Activated naive CD4-positive, alpha-beta T cell treated with anti-CD3 and anti-CD28 coated beads for 36 hours (primary cell): ENCODE measurements at regions of chr19 and their contacts with region 1.

Region 1: DNA sequence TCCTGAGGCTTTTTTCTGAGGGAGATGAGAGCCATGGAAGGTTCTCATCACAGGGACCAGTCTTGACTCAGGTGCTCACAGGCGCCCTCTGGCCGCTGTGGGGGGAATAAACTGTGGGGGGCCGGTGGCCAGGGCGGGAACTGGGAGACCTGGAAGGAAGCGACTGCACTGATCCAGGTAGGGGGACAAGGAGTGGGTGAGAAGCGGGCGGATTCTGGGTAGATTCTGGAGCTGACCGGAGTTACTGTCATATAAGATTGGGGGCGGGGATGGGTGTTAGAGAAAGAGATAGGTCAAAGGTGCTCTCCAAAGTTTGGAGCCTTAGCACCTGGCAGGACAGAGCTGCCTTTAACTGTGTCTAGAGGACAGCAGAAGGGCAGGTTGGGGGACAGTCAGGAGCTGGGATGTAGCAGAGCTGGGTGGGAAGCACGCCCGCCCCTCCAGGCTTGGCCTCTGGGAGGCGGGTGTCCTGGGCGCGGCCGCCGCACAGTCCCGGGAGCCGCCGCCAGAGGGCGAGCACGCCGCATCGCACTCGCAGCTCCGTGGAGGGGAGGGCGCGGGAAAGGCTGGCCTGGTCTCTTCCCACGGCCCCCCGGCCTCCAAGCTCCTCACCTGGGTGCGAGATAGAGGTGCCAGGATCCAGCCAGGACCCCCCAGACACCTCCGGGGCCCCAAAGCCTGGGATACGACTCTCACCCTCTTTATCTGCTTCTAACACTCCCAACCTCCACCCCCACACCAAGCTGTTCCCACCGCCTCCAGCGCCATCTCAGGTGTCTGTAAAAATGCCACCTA is 4.2 kb upstream of the DAND5 start:
- DNase-seq: peak; percentile 92
- H3K4me3 Mint-ChIP-seq: peak overlapping the region; percentile 93
- H3K27ac Mint-ChIP-seq: peak overlapping the region; percentile 88
- H3K4me1 Mint-ChIP-seq: peaks cover 11% of the 10 kb centered on the region
- H3K27me3 Mint-ChIP-seq: no peaks in the 10 kb centered on the region

Region 2: GRCh38 chr19:12705654-12706331 is 259.4 kb before region 1 on chr19:
- CTCF ChIA-PET with region 1: no interaction called
- intact Hi-C with region 1: no loop called
- DNase-seq: no peak
- H3K4me3 Mint-ChIP-seq: no peak overlapping the region
- H3K27ac Mint-ChIP-seq: no peak overlapping the region
- H3K4me1 Mint-ChIP-seq: no peaks in the 10 kb centered on the region
- H3K27me3 Mint-ChIP-seq: no peaks in the 10 kb centered on the region

Region 3: GRCh38 chr19:12825254-12826131 is 139.7 kb before region 1 on chr19:
- CTCF ChIA-PET with region 1: no interaction called
- intact Hi-C with region 1: no loop called
- DNase-seq: peak; percentile 41
- H3K4me3 Mint-ChIP-seq: no peak overlapping the region
- H3K27ac Mint-ChIP-seq: no peak overlapping the region
- H3K4me1 Mint-ChIP-seq: peaks cover 7% of the 10 kb centered on the region
- H3K27me3 Mint-ChIP-seq: peaks cover 40% of the 10 kb centered on the region

Region 4: DNA sequence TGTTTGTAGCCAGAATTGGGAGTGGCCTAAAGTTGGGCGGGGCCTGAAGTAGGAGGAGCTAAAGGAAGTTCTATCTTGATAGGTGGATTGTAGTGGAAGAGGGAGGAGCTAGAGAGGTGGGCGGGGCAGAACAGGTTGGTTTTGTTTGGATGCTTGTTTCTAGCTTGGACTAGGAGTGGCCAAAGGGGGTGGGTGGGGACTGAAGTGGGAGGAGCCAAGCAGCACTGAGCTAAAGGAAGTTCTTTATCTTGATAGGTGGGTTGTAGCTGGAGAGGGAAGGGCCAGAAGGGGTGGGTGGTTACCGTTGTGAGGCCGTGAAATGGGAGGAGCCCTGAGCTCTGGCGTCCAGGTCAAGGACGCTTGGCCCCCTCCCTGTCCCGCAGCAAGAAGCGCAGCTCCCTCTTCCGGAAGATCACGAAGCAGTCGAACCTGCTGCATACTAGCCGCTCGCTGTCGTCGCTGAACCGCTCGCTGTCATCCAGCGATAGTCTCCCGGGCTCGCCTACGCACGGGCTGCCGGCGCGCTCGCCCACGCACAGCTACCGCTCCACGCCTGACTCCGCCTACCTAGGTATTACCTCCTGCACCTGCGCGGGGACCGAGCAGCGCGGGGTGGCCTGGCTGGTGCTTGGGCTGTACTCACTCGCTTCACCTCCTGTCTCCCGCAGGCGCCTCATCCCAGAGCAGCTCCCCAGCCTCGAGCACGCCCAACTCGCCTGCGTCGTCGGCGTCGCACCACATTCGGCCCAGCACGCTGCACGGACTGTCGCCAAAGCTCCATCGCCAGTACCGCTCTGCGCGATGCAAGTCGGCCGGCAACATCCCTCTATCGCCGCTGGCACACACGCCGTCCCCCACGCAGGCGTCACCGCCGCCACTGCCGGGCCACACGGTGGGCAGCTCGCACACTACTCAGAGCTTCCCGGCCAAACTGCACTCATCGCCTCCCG is 92.0 kb before region 1 on chr19:
- CTCF ChIA-PET with region 1: interaction called, 10 read pairs
- intact Hi-C with region 1: no loop called
- DNase-seq: peak; percentile 69
- H3K4me3 Mint-ChIP-seq: no peak overlapping the region
- H3K27ac Mint-ChIP-seq: no peak overlapping the region
- H3K4me1 Mint-ChIP-seq: no peaks in the 10 kb centered on the region
- H3K27me3 Mint-ChIP-seq: no peaks in the 10 kb centered on the region

Region 5: GRCh38 chr19:12890787-12891552 is 74.2 kb before region 1 on chr19 and contains the start of gene GCDH:
- CTCF ChIA-PET with region 1: interaction called, 11 read pairs
- intact Hi-C with region 1: no loop called
- DNase-seq: peak; percentile 98
- H3K4me3 Mint-ChIP-seq: peak within 1 kb of the TSS; percentile 93
- H3K27ac Mint-ChIP-seq: peak within 1 kb of the TSS; percentile 73
- H3K4me1 Mint-ChIP-seq: peaks cover 25% of the 10 kb centered on the region
- H3K27me3 Mint-ChIP-seq: no peaks in the 10 kb centered on the region
- total RNA-seq, gene GCDH: 36.3 to 38.3 TPM

Region 6: DNA sequence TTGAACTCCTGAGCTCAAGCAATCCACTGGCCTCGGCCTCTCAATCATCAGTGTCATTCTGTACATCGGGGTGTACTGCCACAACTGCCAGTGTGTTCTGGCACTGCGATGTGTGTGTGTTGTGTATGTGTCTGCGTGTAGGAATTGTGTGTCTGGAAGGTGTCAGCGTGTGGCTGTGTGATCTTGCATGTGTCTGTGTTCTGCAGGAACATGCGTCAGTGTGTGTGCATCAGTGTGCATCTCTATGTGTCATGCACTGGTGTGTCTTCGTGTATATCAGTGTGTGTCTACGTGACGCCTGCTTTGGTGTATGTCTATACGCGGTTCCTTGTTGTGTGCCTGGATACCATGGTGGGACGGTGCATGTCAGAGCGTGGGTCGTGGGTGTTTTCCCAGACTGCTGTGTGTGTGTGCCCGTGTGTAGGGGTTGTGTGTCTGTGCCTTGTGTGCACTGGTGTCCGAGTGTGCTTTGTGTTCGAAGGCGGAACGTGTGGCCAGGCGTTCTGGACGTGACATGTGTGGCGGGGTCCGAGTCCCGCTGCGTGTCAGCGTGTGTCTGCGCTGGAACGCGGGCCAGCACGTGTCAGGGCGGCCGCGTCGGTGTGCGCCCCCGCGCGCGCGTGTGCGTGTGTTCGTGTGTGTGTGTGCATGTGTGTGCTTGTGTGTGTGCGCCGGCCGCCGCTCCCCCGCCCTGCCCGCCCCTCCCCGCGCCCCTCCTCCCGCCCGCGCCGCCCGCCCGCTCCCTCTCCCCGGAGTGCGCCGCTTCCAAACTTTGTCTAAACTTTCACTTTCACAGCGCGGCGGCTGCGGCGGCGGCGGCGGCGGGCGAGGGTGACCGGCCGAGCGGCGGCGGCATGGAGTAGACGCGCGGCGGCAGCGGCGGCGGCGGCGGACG is 29.7 kb after region 1 on chr19 and contains the start of gene NFIX:
- CTCF ChIA-PET with region 1: interaction called, 12 read pairs
- intact Hi-C with region 1: no loop called
- DNase-seq: peak; percentile 70
- H3K4me3 Mint-ChIP-seq: peak within 1 kb of the TSS; percentile 86
- H3K27ac Mint-ChIP-seq: no peak within 1 kb of the TSS
- H3K4me1 Mint-ChIP-seq: peaks cover 9% of the 10 kb centered on the region
- H3K27me3 Mint-ChIP-seq: no peaks in the 10 kb centered on the region
- total RNA-seq, gene NFIX: 6.2 to 6.4 TPM

Region 7: DNA sequence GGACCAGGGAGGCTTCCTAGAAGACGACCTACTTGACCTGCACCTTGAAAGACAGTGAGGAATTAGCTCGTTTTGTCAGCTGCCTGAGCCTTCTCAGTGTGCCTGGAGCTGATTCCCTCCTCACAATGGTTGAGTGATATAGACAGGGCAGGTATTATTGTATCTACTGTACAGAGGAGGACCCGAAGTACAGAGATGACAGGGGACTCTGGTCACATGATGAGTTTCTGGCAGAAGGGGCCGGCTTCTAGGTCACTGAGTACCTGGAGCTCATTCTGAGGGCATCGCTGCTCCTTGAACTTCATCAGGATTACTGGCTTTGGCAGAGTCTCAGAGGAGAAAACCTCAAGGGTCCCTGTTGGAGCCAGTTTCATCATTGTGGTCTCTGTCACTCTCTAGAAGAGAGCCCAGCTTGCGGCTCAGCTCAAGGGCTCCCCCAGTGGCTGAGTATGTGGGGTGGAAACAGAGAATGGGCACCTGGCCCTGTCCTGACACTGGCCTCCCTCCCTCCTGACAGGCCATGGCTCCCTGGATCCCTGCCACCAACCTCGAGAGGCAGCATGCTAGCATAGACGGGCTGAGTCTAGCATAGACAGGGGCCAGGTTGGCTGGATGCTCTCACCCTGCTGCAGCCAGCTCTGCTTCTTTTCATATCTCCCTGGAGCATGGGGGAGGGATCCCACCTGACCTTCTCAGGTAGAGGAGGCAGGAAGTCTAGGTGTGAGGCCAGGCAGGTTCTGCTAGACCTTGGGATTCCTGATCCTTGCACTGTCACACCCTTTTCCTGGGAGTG is 68.8 kb after region 1 on chr19:
- CTCF ChIA-PET with region 1: interaction called, 32 read pairs
- intact Hi-C with region 1: no loop called
- DNase-seq: peak; percentile 56
- H3K4me3 Mint-ChIP-seq: no peak overlapping the region
- H3K27ac Mint-ChIP-seq: no peak overlapping the region
- H3K4me1 Mint-ChIP-seq: no peaks in the 10 kb centered on the region
- H3K27me3 Mint-ChIP-seq: no peaks in the 10 kb centered on the region

Region 8: GRCh38 chr19:13093407-13094105 is 128.3 kb after region 1 on chr19:
- CTCF ChIA-PET with region 1: interaction called, 36 read pairs
- intact Hi-C with region 1: loop called (anchors 1 kb)
- DNase-seq: peak; percentile 90
- H3K4me3 Mint-ChIP-seq: no peak overlapping the region
- H3K27ac Mint-ChIP-seq: no peak overlapping the region
- H3K4me1 Mint-ChIP-seq: peaks cover 21% of the 10 kb centered on the region
- H3K27me3 Mint-ChIP-seq: peaks cover 29% of the 10 kb centered on the region